Ascending aorta (tissue), 2 donors: ENCODE measurements at regions of chr18 and their contacts with region 1.

Region 1: DNA sequence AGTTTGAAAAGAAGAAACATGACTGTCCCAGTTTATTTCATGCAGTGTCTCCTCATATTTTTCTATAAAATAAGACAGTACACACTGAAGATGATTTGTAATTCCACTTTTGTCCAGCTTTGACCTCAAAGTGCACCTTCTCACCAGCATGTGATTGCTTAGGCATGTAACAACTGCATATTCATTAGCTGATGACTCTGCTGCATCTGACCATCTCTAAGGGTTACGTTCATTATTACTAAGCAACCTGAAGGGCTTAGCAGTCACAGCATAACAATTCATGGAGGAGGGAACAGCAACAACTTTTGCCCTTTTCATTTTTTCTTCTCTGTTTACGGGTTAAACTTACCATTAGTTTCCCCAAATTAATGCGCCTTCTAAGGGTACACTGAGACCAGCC is 330.6 kb upstream of the PIK3C3 start:
- DNase-seq: no peak
- H3K4me3 ChIP-seq: no peak overlapping the region
- H3K27ac ChIP-seq: no peak overlapping the region
- H3K4me1 ChIP-seq: no peaks in the 10 kb centered on the region
- H3K27me3 ChIP-seq: no peaks in the 10 kb centered on the region
- CTCF ChIP-seq: no peak

Region 2: DNA sequence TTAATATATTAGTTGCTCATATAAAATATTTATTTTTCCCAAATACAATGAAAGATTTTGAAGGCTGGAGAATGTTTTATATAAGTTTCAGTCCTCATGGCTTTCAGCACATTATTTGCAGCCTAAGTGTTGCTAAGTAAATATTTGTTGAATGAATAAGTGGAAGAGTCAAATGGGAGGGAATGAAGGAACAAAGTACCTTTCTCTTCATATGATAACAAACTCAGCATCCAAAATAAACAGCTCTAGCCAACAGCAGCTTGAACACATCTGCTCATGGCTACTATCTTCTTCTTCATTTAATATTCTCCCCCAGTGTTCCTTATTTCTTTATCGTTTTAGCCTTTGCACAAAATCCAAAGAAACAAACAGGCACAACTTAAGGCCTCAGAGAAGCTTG is 54.6 kb before region 1 on chr18:
- intact Hi-C with region 1: loop called (anchors 10 kb)
- DNase-seq: no peak
- H3K4me3 ChIP-seq: no peak overlapping the region
- H3K27ac ChIP-seq: no peak overlapping the region
- H3K4me1 ChIP-seq: no peaks in the 10 kb centered on the region
- H3K27me3 ChIP-seq: no peaks in the 10 kb centered on the region
- CTCF ChIP-seq: no peak